K562 (cell line): ENCODE measurements at regions of chrX and their contacts with region 1.

Region 1: GRCh38 chrX:115344885-115345614 is 55.5 kb downstream of the LUZP4 start:
- DNase-seq: no peak
- ATAC-seq: no peak
- H3K4me3 ChIP-seq: no peak overlapping the region
- H3K27ac ChIP-seq: no peak overlapping the region
- H3K4me1 ChIP-seq: no peaks in the 10 kb centered on the region
- H3K27me3 ChIP-seq: no peaks in the 10 kb centered on the region
- CTCF ChIP-seq: no peak
- EP300 ChIP-seq: no peak
- POLR2A ChIP-seq: no peak
- RAD21 ChIP-seq: no peak

Region 2: DNA sequence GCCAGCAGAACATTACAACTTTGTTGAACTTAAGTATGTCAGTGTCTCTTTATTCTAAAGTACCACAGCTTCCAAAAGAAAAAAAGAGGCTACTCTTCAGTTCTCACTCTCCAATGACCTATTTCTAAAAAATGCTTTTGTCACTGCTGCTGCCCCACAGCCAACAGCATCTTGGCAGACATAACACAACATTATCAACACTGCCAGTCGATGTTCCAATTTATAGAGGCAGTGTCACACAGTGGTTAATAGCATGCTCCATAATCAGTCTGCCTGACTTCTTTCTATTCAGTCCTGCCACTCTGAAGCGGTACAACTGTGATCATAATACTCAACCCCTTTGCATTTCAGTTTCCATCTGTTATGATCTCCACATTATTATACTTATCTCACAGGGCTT is 285.2 kb after region 1 on chrX:
- CTCF ChIA-PET with region 1: no interaction called
- POLR2A ChIA-PET with region 1: no interaction called
- in situ Hi-C with region 1: loop called (anchors 10 kb)
- intact Hi-C with region 1: no loop called
- DNase-seq: no peak
- ATAC-seq: no peak
- H3K4me3 ChIP-seq: no peak overlapping the region
- H3K27ac ChIP-seq: no peak overlapping the region
- H3K4me1 ChIP-seq: no peaks in the 10 kb centered on the region
- H3K27me3 ChIP-seq: no peaks in the 10 kb centered on the region
- CTCF ChIP-seq: no peak
- EP300 ChIP-seq: no peak
- POLR2A ChIP-seq: no peak
- RAD21 ChIP-seq: no peak